ENCODE measurements at regions of chr16 and their contacts with region 1.

Region 1: GRCh38 chr16:4038448-4038847 is 77.8 kb downstream of the ADCY9 start:
- DNase-seq: no peak
- H3K4me3 ChIP-seq: no peak overlapping the region
- H3K4me3 Mint-ChIP-seq: peak overlapping the region in 1 of 2 donors; percentile 32
- H3K27ac ChIP-seq: no peak overlapping the region
- H3K27ac Mint-ChIP-seq: peak overlapping the region in 1 of 7 donors; percentile 29
- H3K4me1 ChIP-seq: peaks cover 4 to 9% of the 10 kb centered on the region in 2 donors
- H3K4me1 Mint-ChIP-seq: peaks cover 20% of the 10 kb centered on the region
- H3K27me3 ChIP-seq: no peaks in the 10 kb centered on the region
- H3K27me3 Mint-ChIP-seq: peaks cover 0 to 8% (median 0%) of the 10 kb centered on the region in 3 donors
- CTCF ChIP-seq: no peak

Region 2: GRCh38 chr16:3807425-3808123 is 230.9 kb before region 1 on chr16:
- intact Hi-C with region 1: no loop called
- DNase-seq: no peak
- H3K4me3 ChIP-seq: no peak overlapping the region
- H3K4me3 Mint-ChIP-seq: no peak overlapping the region
- H3K27ac ChIP-seq: peak overlapping the region in 1 of 2 donors; percentile 40
- H3K27ac Mint-ChIP-seq: peak overlapping the region in 3 of 7 donors; percentile 4 to 58 (median 36)
- H3K4me1 ChIP-seq: peaks cover 4 to 7% of the 10 kb centered on the region in 2 donors
- H3K4me1 Mint-ChIP-seq: peaks cover 30% of the 10 kb centered on the region
- H3K27me3 ChIP-seq: no peaks in the 10 kb centered on the region
- H3K27me3 Mint-ChIP-seq: no peaks in the 10 kb centered on the region
- CTCF ChIP-seq: no peak

Region 3: DNA sequence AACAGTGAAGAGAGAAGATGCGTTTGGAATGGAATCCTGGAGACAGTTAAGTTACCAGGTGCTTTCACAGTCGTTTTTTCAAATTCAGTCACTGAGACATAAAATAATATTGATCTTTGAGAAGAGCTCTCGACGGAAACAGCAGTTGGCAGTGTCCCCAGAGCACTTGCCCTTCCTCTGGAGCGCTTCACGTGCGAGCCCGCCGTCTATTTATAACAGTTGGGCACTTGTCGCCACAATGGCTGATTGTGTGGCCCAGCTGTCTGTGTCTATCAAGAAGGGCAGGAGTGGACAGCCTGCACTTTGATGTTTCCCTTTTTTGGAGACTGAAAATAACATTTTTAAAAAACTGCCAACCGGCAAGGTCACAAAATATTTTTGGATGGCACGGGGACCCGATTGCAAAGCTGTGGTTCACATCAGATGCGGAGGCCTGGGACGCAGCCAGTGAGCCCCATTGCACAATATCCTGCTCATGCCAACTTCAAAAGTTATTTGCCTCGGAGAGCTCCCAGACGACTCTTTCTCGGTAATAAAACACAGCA is 14.9 kb after region 1 on chr16:
- intact Hi-C with region 1: no loop called
- DNase-seq: peak; percentile 44 to 65 (median 60)
- H3K4me3 ChIP-seq: peak overlapping the region; percentile 10 to 61 (median 13)
- H3K4me3 Mint-ChIP-seq: peak overlapping the region; percentile 73 to 87
- H3K27ac ChIP-seq: peak overlapping the region; percentile 92 to 95
- H3K27ac Mint-ChIP-seq: peak overlapping the region; percentile 82 to 96 (median 96)
- H3K4me1 ChIP-seq: peaks cover 45 to 57% of the 10 kb centered on the region in 2 donors
- H3K4me1 Mint-ChIP-seq: peaks cover 57% of the 10 kb centered on the region
- H3K27me3 ChIP-seq: no peaks in the 10 kb centered on the region
- H3K27me3 Mint-ChIP-seq: peaks cover 0 to 6% (median 2%) of the 10 kb centered on the region in 3 donors
- CTCF ChIP-seq: no peak

Region 4: GRCh38 chr16:4071686-4072561 is 33.5 kb after region 1 on chr16:
- intact Hi-C with region 1: loop called in 1 of 2 experiments (anchors 5 kb)
- DNase-seq: no peak
- H3K4me3 ChIP-seq: no peak overlapping the region
- H3K4me3 Mint-ChIP-seq: no peak overlapping the region
- H3K27ac ChIP-seq: no peak overlapping the region
- H3K27ac Mint-ChIP-seq: no peak overlapping the region
- H3K4me1 ChIP-seq: no peaks in the 10 kb centered on the region
- H3K4me1 Mint-ChIP-seq: no peaks in the 10 kb centered on the region
- H3K27me3 ChIP-seq: no peaks in the 10 kb centered on the region
- H3K27me3 Mint-ChIP-seq: no peaks in the 10 kb centered on the region
- CTCF ChIP-seq: no peak